CD4-positive, alpha-beta T cell (primary cell): ENCODE measurements at regions of chr1 and their contacts with region 1.

Region 1: GRCh38 chr1:206912445-206913095 is 9.2 kb downstream of the FCMR start:
- DNase-seq: peak in 11 of 14 experiments; percentile 34 to 86 (median 56)
- ATAC-seq: peak; percentile 38
- H3K4me3 ChIP-seq: no peak overlapping the region
- H3K4me3 Mint-ChIP-seq: peak overlapping the region; percentile 79
- H3K27ac ChIP-seq: peak overlapping the region in 1 of 2 donors; percentile 39
- H3K27ac Mint-ChIP-seq: no peak overlapping the region
- H3K4me1 ChIP-seq: peaks cover 97% of the 10 kb centered on the region
- H3K4me1 Mint-ChIP-seq: peaks cover 92% of the 10 kb centered on the region
- H3K27me3 ChIP-seq: no peaks in the 10 kb centered on the region
- H3K27me3 Mint-ChIP-seq: no peaks in the 10 kb centered on the region
- CTCF ChIP-seq: peak; percentile 89

Region 2: GRCh38 chr1:206635080-206635977 is 277.2 kb before region 1 on chr1 and contains the start of gene DYRK3:
- CTCF ChIA-PET with region 1: no interaction called
- POLR2A ChIA-PET with region 1: no interaction called
- intact Hi-C with region 1: loop called in 1 of 2 experiments (anchors 2 kb)
- DNase-seq: peak; percentile 74 to 95 (median 85)
- ATAC-seq: peak; percentile 93
- H3K4me3 ChIP-seq: peak within 1 kb of the TSS; percentile 64
- H3K4me3 Mint-ChIP-seq: peak within 1 kb of the TSS; percentile 92
- H3K27ac ChIP-seq: peak within 1 kb of the TSS in 1 of 2 donors; percentile 52
- H3K27ac Mint-ChIP-seq: peak within 1 kb of the TSS; percentile 66
- H3K4me1 ChIP-seq: peaks cover 20% of the 10 kb centered on the region
- H3K4me1 Mint-ChIP-seq: peaks cover 18% of the 10 kb centered on the region
- H3K27me3 ChIP-seq: peaks cover 0 to 14% of the 10 kb centered on the region in 2 experiments
- H3K27me3 Mint-ChIP-seq: no peaks in the 10 kb centered on the region
- CTCF ChIP-seq: no peak
- total RNA-seq, gene DYRK3: 1.6 to 1.7 TPM

Region 3: GRCh38 chr1:206803221-206803730 is 109.3 kb before region 1 on chr1:
- CTCF ChIA-PET with region 1: interaction called, 5 read pairs
- POLR2A ChIA-PET with region 1: interaction called, 11 read pairs
- intact Hi-C with region 1: loop called (anchors 2 kb)
- DNase-seq: peak; percentile 61 to 97 (median 70)
- ATAC-seq: peak; percentile 89
- H3K4me3 ChIP-seq: no peak overlapping the region
- H3K4me3 Mint-ChIP-seq: peak overlapping the region; percentile 7
- H3K27ac ChIP-seq: peak overlapping the region; percentile 58 to 80
- H3K27ac Mint-ChIP-seq: peak overlapping the region; percentile 87
- H3K4me1 ChIP-seq: peaks cover 59% of the 10 kb centered on the region
- H3K4me1 Mint-ChIP-seq: peaks cover 73% of the 10 kb centered on the region
- H3K27me3 ChIP-seq: no peaks in the 10 kb centered on the region
- H3K27me3 Mint-ChIP-seq: no peaks in the 10 kb centered on the region
- CTCF ChIP-seq: no peak

Region 4: DNA sequence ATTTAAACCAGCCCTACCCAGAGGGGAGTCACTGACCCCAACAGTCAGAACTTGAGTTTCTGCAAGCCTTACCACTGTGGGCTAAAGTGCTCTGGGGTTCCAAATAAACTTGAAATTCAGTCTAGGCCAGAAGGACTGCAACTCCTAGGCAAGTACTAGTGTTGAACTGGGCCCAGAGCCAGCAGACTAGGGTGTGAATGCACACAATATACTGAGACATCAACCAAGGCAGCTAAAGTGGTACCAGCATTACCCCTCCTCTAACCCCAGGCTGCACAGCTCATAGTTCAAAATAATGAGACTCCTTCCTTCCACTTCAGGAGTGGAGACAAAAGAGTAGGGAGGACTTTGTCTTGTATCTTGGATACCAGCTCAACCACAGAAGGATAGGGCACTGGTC is 66.1 kb before region 1 on chr1:
- CTCF ChIA-PET with region 1: no interaction called
- POLR2A ChIA-PET with region 1: no interaction called
- intact Hi-C with region 1: no loop called
- DNase-seq: no peak
- ATAC-seq: no peak
- H3K4me3 ChIP-seq: no peak overlapping the region
- H3K4me3 Mint-ChIP-seq: no peak overlapping the region
- H3K27ac ChIP-seq: no peak overlapping the region
- H3K27ac Mint-ChIP-seq: no peak overlapping the region
- H3K4me1 ChIP-seq: no peaks in the 10 kb centered on the region
- H3K4me1 Mint-ChIP-seq: no peaks in the 10 kb centered on the region
- H3K27me3 ChIP-seq: no peaks in the 10 kb centered on the region
- H3K27me3 Mint-ChIP-seq: peaks cover 8% of the 10 kb centered on the region
- CTCF ChIP-seq: no peak

Region 5: DNA sequence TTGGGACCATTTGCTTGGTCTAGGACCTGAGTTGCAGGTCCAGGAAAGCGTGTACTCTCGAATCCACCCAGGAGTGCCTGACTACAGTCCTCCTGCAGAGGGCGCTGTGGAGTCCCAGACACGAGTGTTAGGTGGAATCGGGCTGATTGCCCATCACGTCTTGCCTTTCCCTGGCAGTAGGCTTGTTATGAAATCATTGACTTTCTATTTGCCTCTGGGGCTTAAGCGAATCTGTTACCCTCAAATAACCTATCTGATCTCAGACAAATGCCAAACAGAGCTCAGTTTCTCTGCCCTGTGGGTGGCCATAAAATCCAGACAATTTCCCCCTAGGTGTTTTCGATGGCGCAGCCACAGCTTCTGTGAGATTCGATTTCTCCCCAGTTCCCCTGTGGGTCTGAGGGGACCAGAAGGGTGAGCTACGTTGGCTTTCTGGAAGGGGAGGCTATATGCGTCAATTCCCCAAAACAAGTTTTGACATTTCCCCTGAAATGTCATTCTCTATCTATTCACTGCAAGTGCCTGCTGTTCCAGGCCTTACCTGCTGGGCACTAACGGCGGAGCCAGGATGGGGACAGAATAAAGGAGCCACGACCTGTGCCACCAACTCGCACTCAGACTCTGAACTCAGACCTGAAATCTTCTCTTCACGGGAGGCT is 47.4 kb before region 1 on chr1 and contains the start of gene IL20:
- CTCF ChIA-PET with region 1: interaction called, 18 read pairs
- POLR2A ChIA-PET with region 1: no interaction called
- intact Hi-C with region 1: loop called (anchors 1 kb)
- DNase-seq: peak; percentile 79 to 93 (median 85)
- ATAC-seq: peak; percentile 98
- H3K4me3 ChIP-seq: no peak within 1 kb of the TSS
- H3K4me3 Mint-ChIP-seq: no peak within 1 kb of the TSS
- H3K27ac ChIP-seq: no peak within 1 kb of the TSS
- H3K27ac Mint-ChIP-seq: no peak within 1 kb of the TSS
- H3K4me1 ChIP-seq: peaks cover 5% of the 10 kb centered on the region
- H3K4me1 Mint-ChIP-seq: peaks cover 7% of the 10 kb centered on the region
- H3K27me3 ChIP-seq: peaks cover 0 to 2% of the 10 kb centered on the region in 2 experiments
- H3K27me3 Mint-ChIP-seq: peaks cover 12% of the 10 kb centered on the region
- CTCF ChIP-seq: peak; percentile 87
- total RNA-seq, gene IL20: not detected

Region 6: DNA sequence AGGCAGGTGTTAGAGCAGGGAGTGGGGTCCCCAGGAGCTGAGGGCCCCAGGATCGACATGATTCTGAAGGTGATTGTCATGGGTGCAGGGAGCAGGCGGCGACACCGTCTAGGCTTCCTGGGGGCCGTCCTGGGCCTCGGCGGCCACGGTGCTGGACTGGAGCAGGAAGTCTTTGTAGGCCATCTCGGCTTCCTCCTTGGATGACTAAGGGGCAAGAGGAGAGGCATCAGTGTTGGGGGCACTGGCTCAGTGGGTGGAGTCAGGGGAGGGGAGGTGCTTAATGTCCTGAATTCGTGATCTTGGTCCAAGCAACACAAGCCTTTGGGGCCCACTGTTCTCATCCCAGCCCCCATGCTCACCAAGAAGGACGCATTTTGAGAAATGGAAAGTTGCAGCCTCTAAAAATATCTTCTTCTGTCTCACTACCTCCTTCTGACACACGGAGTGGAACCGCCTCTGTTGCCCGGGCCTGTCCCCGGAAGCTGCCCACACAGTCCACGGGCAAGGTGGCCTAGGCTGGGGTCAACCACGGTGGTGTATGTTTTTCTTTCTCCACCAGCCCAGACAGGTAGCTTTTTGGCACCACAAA is 17.7 kb after region 1 on chr1:
- CTCF ChIA-PET with region 1: interaction called, 22 read pairs
- POLR2A ChIA-PET with region 1: interaction called, 26 read pairs
- intact Hi-C with region 1: loop called (anchors 2 kb)
- DNase-seq: peak in 4 of 14 experiments; percentile 45 to 60 (median 52)
- ATAC-seq: no peak
- H3K4me3 ChIP-seq: no peak overlapping the region
- H3K4me3 Mint-ChIP-seq: peak overlapping the region; percentile 7
- H3K27ac ChIP-seq: peak overlapping the region in 1 of 2 donors; percentile 45
- H3K27ac Mint-ChIP-seq: peak overlapping the region; percentile 84
- H3K4me1 ChIP-seq: peaks cover 49% of the 10 kb centered on the region
- H3K4me1 Mint-ChIP-seq: peaks cover 65% of the 10 kb centered on the region
- H3K27me3 ChIP-seq: no peaks in the 10 kb centered on the region
- H3K27me3 Mint-ChIP-seq: no peaks in the 10 kb centered on the region
- CTCF ChIP-seq: no peak

Region 7: DNA sequence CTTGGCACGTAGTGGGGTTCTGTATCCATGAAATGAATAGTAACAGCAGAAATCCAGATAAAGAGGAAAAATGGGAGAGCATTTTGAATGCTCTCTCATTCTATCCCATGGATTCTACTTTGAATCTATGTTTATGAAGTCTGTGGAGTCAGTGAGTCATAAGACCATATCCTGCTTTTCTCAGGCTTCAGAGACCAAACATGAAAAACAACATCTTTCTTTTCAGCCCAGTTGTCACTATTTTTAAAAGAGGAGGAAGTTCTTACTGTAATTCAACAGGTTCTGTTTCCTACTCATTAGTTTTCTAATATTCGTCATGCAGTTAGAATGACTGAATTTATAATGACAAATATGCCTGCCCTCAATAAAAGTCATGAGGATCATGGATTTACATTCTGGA is 369.5 kb after region 1 on chr1:
- CTCF ChIA-PET with region 1: no interaction called
- POLR2A ChIA-PET with region 1: no interaction called
- intact Hi-C with region 1: no loop called
- DNase-seq: peak in 2 of 14 experiments; percentile 8 to 27
- ATAC-seq: peak; percentile 61
- H3K4me3 ChIP-seq: no peak overlapping the region
- H3K4me3 Mint-ChIP-seq: peak overlapping the region; percentile 2
- H3K27ac ChIP-seq: no peak overlapping the region
- H3K27ac Mint-ChIP-seq: peak overlapping the region; percentile 53
- H3K4me1 ChIP-seq: peaks cover 14% of the 10 kb centered on the region
- H3K4me1 Mint-ChIP-seq: peaks cover 66% of the 10 kb centered on the region
- H3K27me3 ChIP-seq: no peaks in the 10 kb centered on the region
- H3K27me3 Mint-ChIP-seq: no peaks in the 10 kb centered on the region
- CTCF ChIP-seq: no peak